Natural killer cell (primary cell): ENCODE measurements at regions of chr17 and their contacts with region 1.

Region 1: GRCh38 chr17:44533533-44534246 is 23.6 kb upstream of the FZD2 start:
- DNase-seq: peak; percentile 82 to 91
- ATAC-seq: peak; percentile 83 to 97 (median 95)
- H3K4me3 ChIP-seq: no peak overlapping the region
- H3K4me3 Mint-ChIP-seq: no peak overlapping the region
- H3K27ac ChIP-seq: no peak overlapping the region
- H3K27ac Mint-ChIP-seq: no peak overlapping the region
- H3K4me1 ChIP-seq: peaks cover 8% of the 10 kb centered on the region
- H3K4me1 Mint-ChIP-seq: peaks cover 8 to 10% of the 10 kb centered on the region in 2 donors
- H3K27me3 ChIP-seq: no peaks in the 10 kb centered on the region
- H3K27me3 Mint-ChIP-seq: peaks cover 6% of the 10 kb centered on the region in 2 donors
- CTCF ChIP-seq: peak; percentile 94

Region 2: DNA sequence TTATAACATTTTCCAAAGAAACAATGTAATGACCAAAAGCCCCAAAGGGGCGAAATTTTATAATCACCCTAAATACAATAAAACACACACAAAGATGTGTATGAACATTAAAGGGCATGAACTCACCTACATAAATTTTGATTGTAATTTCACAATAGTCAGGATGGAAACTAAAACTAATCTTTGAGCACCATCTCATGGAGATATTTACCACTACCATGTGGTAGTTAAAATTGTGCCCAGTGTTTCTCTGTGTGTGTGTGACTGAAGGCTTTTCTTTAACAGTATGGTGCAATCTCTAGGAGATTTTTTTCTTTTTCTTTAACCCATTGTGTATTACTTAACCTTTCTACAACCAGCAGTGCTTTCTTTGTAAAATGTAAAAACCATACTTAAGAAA is 102.9 kb after region 1 on chr17:
- intact Hi-C with region 1: loop called (anchors 1 kb)
- DNase-seq: peak in 1 of 2 donors; percentile 33
- ATAC-seq: peak in 2 of 3 donors; percentile 29 to 47
- H3K4me3 ChIP-seq: no peak overlapping the region
- H3K4me3 Mint-ChIP-seq: no peak overlapping the region
- H3K27ac ChIP-seq: no peak overlapping the region
- H3K27ac Mint-ChIP-seq: no peak overlapping the region
- H3K4me1 ChIP-seq: no peaks in the 10 kb centered on the region
- H3K4me1 Mint-ChIP-seq: no peaks in the 10 kb centered on the region
- H3K27me3 ChIP-seq: no peaks in the 10 kb centered on the region
- H3K27me3 Mint-ChIP-seq: peaks cover 7 to 10% of the 10 kb centered on the region in 2 donors
- CTCF ChIP-seq: peak; percentile 35

Region 3: GRCh38 chr17:44672479-44673093 is 138.9 kb after region 1 on chr17:
- intact Hi-C with region 1: loop called (anchors 2 kb)
- DNase-seq: peak in 1 of 2 donors; percentile 12
- ATAC-seq: no peak
- H3K4me3 ChIP-seq: no peak overlapping the region
- H3K4me3 Mint-ChIP-seq: no peak overlapping the region
- H3K27ac ChIP-seq: no peak overlapping the region
- H3K27ac Mint-ChIP-seq: no peak overlapping the region
- H3K4me1 ChIP-seq: no peaks in the 10 kb centered on the region
- H3K4me1 Mint-ChIP-seq: no peaks in the 10 kb centered on the region
- H3K27me3 ChIP-seq: no peaks in the 10 kb centered on the region
- H3K27me3 Mint-ChIP-seq: no peaks in the 10 kb centered on the region
- CTCF ChIP-seq: no peak

Region 4: DNA sequence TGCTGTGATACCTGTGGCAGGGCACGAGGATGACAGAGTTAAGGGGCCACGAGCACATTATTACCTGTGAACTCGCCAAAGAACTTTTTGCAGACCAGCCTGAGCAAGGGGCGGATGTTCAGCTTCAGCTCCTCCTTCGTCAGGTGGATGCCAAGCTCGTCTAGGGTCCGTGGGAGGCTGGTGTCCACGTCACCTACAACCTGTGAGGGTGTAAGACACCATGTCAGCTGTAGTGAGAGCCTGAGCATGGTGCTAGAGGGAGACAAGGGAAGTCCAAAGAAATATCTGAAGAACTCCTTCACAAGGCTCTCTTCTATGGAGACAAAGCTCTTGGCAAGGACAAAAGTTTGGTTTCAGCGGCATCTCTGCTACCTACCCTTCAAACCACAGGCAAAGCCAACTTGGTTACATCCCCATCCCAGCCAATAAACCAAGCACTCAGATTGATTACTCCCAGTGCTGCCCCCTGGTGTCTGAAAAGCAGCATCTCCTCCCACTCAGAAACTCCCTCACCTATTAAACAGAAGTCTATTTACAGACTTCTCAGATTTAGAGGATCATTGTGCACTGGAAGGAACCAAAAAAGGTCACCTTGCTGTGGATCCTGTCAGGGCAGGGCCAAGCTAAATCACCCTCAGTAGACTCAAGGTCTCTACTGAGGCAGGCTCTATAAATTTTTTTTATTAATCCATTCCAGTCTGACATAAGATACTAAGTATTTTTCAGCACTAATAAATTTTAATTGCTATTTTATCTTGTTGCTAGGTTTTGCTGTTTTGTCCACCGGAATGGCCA is 331.4 kb after region 1 on chr17:
- intact Hi-C with region 1: loop called (anchors 1 kb)
- DNase-seq: peak; percentile 37 to 88
- ATAC-seq: peak; percentile 60 to 81 (median 77)
- H3K4me3 ChIP-seq: no peak overlapping the region
- H3K4me3 Mint-ChIP-seq: no peak overlapping the region
- H3K27ac ChIP-seq: no peak overlapping the region
- H3K27ac Mint-ChIP-seq: no peak overlapping the region
- H3K4me1 ChIP-seq: no peaks in the 10 kb centered on the region
- H3K4me1 Mint-ChIP-seq: no peaks in the 10 kb centered on the region
- H3K27me3 ChIP-seq: no peaks in the 10 kb centered on the region
- H3K27me3 Mint-ChIP-seq: no peaks in the 10 kb centered on the region
- CTCF ChIP-seq: peak; percentile 88